B cell (primary cell): ENCODE measurements at regions of chr3 and their contacts with region 1.

Region 1: GRCh38 chr3:59364496-59364895 is 314.7 kb upstream of the CFAP20DC start:
- DNase-seq: no peak
- ATAC-seq: no peak
- H3K4me3 ChIP-seq: no peak overlapping the region
- H3K4me3 Mint-ChIP-seq: no peak overlapping the region
- H3K27ac ChIP-seq: no peak overlapping the region
- H3K27ac Mint-ChIP-seq: no peak overlapping the region
- H3K4me1 ChIP-seq: peaks cover 4 to 9% of the 10 kb centered on the region in 2 donors
- H3K4me1 Mint-ChIP-seq: peaks cover 20% of the 10 kb centered on the region
- H3K27me3 ChIP-seq: no peaks in the 10 kb centered on the region
- H3K27me3 Mint-ChIP-seq: no peaks in the 10 kb centered on the region
- CTCF ChIP-seq: no peak

Region 2: GRCh38 chr3:58568572-58569286 is 795.8 kb before region 1 on chr3:
- CTCF ChIA-PET with region 1: no interaction called
- POLR2A ChIA-PET with region 1: interaction called, 13 read pairs
- intact Hi-C with region 1: no loop called
- DNase-seq: peak; percentile 70
- ATAC-seq: peak; percentile 56
- H3K4me3 ChIP-seq: peak overlapping the region in 2 of 5 experiments; percentile 11 to 15
- H3K4me3 Mint-ChIP-seq: peak overlapping the region; percentile 80
- H3K27ac ChIP-seq: no peak overlapping the region
- H3K27ac Mint-ChIP-seq: no peak overlapping the region
- H3K4me1 ChIP-seq: peaks cover 4 to 6% of the 10 kb centered on the region in 2 donors
- H3K4me1 Mint-ChIP-seq: peaks cover 7% of the 10 kb centered on the region
- H3K27me3 ChIP-seq: no peaks in the 10 kb centered on the region
- H3K27me3 Mint-ChIP-seq: no peaks in the 10 kb centered on the region
- CTCF ChIP-seq: peak; percentile 98

Region 3: DNA sequence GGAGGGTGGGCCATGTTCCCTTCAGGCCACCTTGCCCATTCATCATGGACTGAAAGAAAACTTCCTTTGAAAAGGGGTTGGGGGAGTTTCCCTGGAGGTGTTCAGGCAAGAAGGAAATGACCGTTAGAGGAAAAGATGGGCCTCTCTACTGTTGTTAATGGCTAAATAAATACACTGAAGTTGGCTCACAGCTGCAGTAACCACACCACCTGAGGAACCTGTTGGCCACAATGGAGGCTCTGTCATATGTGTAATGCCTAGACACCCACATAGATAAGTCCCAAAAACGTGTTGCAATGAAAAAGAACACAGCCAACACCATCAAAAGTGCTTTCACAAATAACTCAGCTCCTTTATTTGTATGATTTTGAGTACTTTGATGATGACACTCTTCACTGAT is 659.8 kb before region 1 on chr3:
- CTCF ChIA-PET with region 1: no interaction called
- POLR2A ChIA-PET with region 1: no interaction called
- intact Hi-C with region 1: no loop called
- DNase-seq: no peak
- ATAC-seq: no peak
- H3K4me3 ChIP-seq: no peak overlapping the region
- H3K4me3 Mint-ChIP-seq: no peak overlapping the region
- H3K27ac ChIP-seq: no peak overlapping the region
- H3K27ac Mint-ChIP-seq: no peak overlapping the region
- H3K4me1 ChIP-seq: no peaks in the 10 kb centered on the region
- H3K4me1 Mint-ChIP-seq: no peaks in the 10 kb centered on the region
- H3K27me3 ChIP-seq: no peaks in the 10 kb centered on the region
- H3K27me3 Mint-ChIP-seq: no peaks in the 10 kb centered on the region
- CTCF ChIP-seq: no peak